PC-9 (cell line): ENCODE measurements at regions of chr12 and their contacts with region 1.

Region 1: DNA sequence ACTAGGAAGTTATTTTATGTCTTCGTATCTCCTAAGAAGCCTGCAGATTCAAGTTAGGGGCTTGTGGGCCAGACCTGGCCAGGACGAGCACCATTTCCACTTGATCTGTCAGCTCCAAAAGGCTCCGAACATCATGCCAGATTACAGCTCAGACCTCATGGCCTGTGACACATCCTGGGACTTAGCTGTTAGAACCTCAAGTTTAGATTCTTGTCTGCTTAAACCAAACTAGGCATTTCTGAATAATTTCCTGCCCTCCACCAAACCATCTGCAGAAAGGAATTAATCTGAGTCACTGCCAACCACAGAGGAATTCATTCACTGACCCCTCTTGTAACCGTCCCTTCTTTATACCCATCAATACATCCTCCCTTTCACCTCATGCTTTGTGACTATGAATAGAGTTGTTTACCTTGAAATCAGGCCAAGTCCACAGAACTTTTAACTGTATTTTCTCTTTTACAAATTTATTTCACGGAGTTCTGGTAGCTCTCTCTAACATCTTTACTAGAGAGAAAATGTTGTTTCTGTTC is 120.3 kb downstream of the FBXL14 start:
- DNase-seq: peak; percentile 55 to 80
- H3K4me3 ChIP-seq: no peak overlapping the region
- H3K27ac ChIP-seq: peak overlapping the region; percentile 33
- H3K4me1 ChIP-seq: peaks cover 34% of the 10 kb centered on the region
- H3K27me3 ChIP-seq: no peaks in the 10 kb centered on the region
- CTCF ChIP-seq: no peak

Region 2: DNA sequence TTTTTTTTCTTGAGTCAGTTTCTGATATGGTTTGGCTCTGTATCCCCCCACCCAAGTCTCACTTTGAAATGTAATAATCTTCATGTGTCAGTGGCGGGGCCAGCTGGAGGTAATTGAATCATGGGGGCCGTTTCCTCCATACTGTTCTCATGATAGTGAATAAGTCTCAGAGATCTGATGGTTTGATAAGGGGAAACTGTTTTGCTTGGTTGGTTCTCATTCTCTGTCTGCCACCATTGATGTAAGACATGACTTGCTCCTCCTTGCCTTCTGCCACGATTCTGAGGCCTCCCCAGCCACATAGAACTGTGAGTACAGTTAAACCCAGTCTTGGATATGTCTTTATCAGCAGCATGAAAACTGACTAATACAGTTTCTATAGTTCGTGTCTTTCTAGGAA is 678.8 kb before region 1 on chr12:
- CTCF ChIA-PET with region 1: no interaction called
- POLR2A ChIA-PET with region 1: interaction called, 12 read pairs
- intact Hi-C with region 1: no loop called
- DNase-seq: no peak
- H3K4me3 ChIP-seq: no peak overlapping the region
- H3K27ac ChIP-seq: no peak overlapping the region
- H3K4me1 ChIP-seq: peaks cover 8% of the 10 kb centered on the region
- H3K27me3 ChIP-seq: no peaks in the 10 kb centered on the region
- CTCF ChIP-seq: no peak

Region 3: DNA sequence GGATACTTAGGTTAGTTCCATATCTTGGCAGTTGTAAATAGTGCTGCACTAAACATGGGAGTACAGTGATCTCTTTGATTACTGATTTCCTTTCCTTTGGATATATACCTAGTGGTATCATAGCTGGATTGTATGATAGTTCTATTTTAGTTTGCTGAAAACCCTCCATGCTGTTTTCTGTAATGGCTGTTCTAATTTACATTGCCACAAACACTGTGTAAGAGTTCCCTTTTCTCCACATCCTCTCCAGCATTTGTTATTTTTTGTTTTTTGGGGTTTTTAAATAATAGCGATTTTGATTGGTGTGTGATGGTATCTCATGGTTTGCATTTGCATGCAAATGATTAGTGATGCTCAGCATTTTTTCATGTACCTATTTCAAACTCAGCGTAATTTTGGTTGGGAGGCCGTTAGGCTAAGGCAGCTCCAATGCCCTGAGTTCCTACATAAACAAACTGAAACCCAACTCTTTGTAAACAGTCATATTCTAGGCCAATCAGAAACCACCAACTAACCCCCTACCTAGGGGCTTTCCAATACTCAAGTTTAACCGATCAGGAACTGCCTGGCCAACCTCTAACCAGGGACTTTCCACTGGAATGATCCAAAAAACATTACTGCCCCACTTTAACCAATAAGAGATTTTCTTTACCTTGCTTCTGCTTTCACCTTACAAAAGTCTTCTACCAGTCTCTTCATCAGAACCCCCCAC is 51.3 kb before region 1 on chr12:
- CTCF ChIA-PET with region 1: no interaction called
- POLR2A ChIA-PET with region 1: no interaction called
- intact Hi-C with region 1: no loop called
- DNase-seq: no peak
- H3K4me3 ChIP-seq: no peak overlapping the region
- H3K27ac ChIP-seq: no peak overlapping the region
- H3K4me1 ChIP-seq: no peaks in the 10 kb centered on the region
- H3K27me3 ChIP-seq: no peaks in the 10 kb centered on the region
- CTCF ChIP-seq: no peak

Region 4: GRCh38 chr12:1540690-1541089 is 66.6 kb after region 1 on chr12:
- CTCF ChIA-PET with region 1: interaction called, 3 read pairs
- POLR2A ChIA-PET with region 1: interaction called, 4 read pairs
- intact Hi-C with region 1: loop called (anchors 1 kb)
- DNase-seq: peak; percentile 42 to 95
- H3K4me3 ChIP-seq: no peak overlapping the region
- H3K27ac ChIP-seq: no peak overlapping the region
- H3K4me1 ChIP-seq: peaks cover 20% of the 10 kb centered on the region
- H3K27me3 ChIP-seq: no peaks in the 10 kb centered on the region
- CTCF ChIP-seq: no peak

Region 5: GRCh38 chr12:1594261-1595025 is 120.3 kb after region 1 on chr12 and contains the start of gene FBXL14:
- CTCF ChIA-PET with region 1: no interaction called
- POLR2A ChIA-PET with region 1: interaction called, 15 read pairs
- intact Hi-C with region 1: no loop called
- DNase-seq: peak; percentile 65 to 90
- H3K4me3 ChIP-seq: peak within 1 kb of the TSS; percentile 91
- H3K27ac ChIP-seq: peak within 1 kb of the TSS; percentile 20; the same call in 1 of the 2 replicates
- H3K4me1 ChIP-seq: peaks cover 44% of the 10 kb centered on the region
- H3K27me3 ChIP-seq: no peaks in the 10 kb centered on the region
- CTCF ChIP-seq: no peak
- total RNA-seq, gene FBXL14: 16.3 and 21.1 TPM in 2 replicates